ENCODE measurements at regions of chr12 and their contacts with region 1.

Region 1: GRCh38 chr12:30440826-30441602 is 254.7 kb downstream of the IPO8 start:
- DNase-seq: peak; percentile 43
- ATAC-seq: peak; percentile 99
- H3K4me3 ChIP-seq: no peak overlapping the region
- H3K27ac ChIP-seq: no peak overlapping the region
- H3K4me1 ChIP-seq: no peaks in the 10 kb centered on the region
- H3K27me3 ChIP-seq: no peaks in the 10 kb centered on the region
- CTCF ChIP-seq: peak in 2 of 3 experiments; percentile 63 to 80; a peak in 4 of 6 replicates
- POLR2A ChIP-seq: no peak
- RAD21 ChIP-seq: peak; percentile 17; the same call in 1 of the 2 replicates

Region 2: GRCh38 chr12:30010071-30011052 is 430.7 kb before region 1 on chr12:
- CTCF ChIA-PET with region 1: no interaction called
- POLR2A ChIA-PET with region 1: no interaction called
- RAD21 ChIA-PET with region 1: no interaction called
- intact Hi-C with region 1: no loop called
- DNase-seq: no peak
- ATAC-seq: no peak
- H3K4me3 ChIP-seq: no peak overlapping the region
- H3K27ac ChIP-seq: no peak overlapping the region
- H3K4me1 ChIP-seq: no peaks in the 10 kb centered on the region
- H3K27me3 ChIP-seq: no peaks in the 10 kb centered on the region
- CTCF ChIP-seq: no peak
- POLR2A ChIP-seq: no peak
- RAD21 ChIP-seq: no peak

Region 3: DNA sequence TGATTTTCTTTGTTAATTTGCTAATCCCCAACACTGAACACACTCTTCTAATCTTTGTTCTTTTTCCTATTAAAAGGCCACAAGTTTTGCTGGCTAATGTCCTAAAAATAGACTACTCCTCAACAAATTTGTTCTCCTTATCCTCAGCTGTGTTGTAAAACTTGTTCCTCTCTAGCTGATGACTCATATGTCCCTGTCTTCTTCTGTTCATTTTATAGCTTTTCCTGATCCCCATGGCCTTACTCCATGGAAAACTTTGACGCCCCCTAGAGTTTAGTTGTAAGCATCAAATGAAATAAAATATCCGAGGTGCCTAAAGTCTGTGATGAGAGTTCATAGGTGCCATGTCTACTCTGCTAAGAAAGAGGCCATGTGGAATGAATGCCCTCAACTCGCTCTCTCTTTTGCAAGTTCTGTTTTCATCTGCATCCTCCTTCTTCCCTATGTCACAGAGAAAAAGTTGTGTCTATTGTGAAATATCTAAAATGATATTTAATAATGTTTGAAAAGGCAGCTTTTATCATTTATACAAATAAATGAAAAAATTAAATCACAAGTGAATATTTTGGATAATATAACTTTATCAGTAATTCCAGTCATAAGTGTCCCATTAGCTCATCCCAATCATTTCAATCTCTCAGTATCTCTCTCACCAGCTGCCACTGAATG is 16.7 kb after region 1 on chr12:
- CTCF ChIA-PET with region 1: interaction called, 18 read pairs
- POLR2A ChIA-PET with region 1: no interaction called
- RAD21 ChIA-PET with region 1: interaction called in 1 of 2 experiments, 3 read pairs
- intact Hi-C with region 1: no loop called
- DNase-seq: peak; percentile 75
- ATAC-seq: peak; percentile 96
- H3K4me3 ChIP-seq: no peak overlapping the region
- H3K27ac ChIP-seq: no peak overlapping the region
- H3K4me1 ChIP-seq: peaks cover 0 to 14% of the 10 kb centered on the region in 2 experiments; a peak in 3 of 4 replicates
- H3K27me3 ChIP-seq: no peaks in the 10 kb centered on the region
- CTCF ChIP-seq: peak; percentile 48 to 64 (median 56); a peak in 5 of 6 replicates
- POLR2A ChIP-seq: no peak
- RAD21 ChIP-seq: peak; percentile 72

Measured in HCT116 (cell line).